ENCODE measurements at regions of chr19 and their contacts with region 1.

Region 1: GRCh38 chr19:55339048-55339888 is at the start of gene KMT5C:
- DNase-seq: peak; percentile 100
- H3K4me3 Mint-ChIP-seq: peak within 1 kb of the TSS; percentile 87
- H3K27ac Mint-ChIP-seq: peak within 1 kb of the TSS; percentile 95
- H3K4me1 Mint-ChIP-seq: peaks cover 13% of the 10 kb centered on the region
- H3K27me3 Mint-ChIP-seq: peaks cover 6% of the 10 kb centered on the region
- total RNA-seq, gene KMT5C: 34.2 to 35.2 TPM

Region 2: GRCh38 chr19:54463531-54464043 is 875.7 kb before region 1 on chr19 and contains the start of gene LENG9:
- CTCF ChIA-PET with region 1: no interaction called
- POLR2A ChIA-PET with region 1: no interaction called
- intact Hi-C with region 1: loop called (anchors 1 kb)
- DNase-seq: peak; percentile 99
- H3K4me3 Mint-ChIP-seq: peak within 1 kb of the TSS; percentile 78
- H3K27ac Mint-ChIP-seq: peak within 1 kb of the TSS; percentile 92
- H3K4me1 Mint-ChIP-seq: peaks cover 29% of the 10 kb centered on the region
- H3K27me3 Mint-ChIP-seq: no peaks in the 10 kb centered on the region
- total RNA-seq, gene LENG9: 5.3 to 5.6 TPM

Region 3: GRCh38 chr19:55279770-55280643 is 59.3 kb before region 1 on chr19 and contains the start of gene HSPBP1:
- CTCF ChIA-PET with region 1: no interaction called
- POLR2A ChIA-PET with region 1: interaction called, 6 read pairs
- intact Hi-C with region 1: loop called (anchors 1 kb)
- DNase-seq: peak; percentile 98
- H3K4me3 Mint-ChIP-seq: peak within 1 kb of the TSS; percentile 93
- H3K27ac Mint-ChIP-seq: peak within 1 kb of the TSS; percentile 84
- H3K4me1 Mint-ChIP-seq: peaks cover 42% of the 10 kb centered on the region
- H3K27me3 Mint-ChIP-seq: no peaks in the 10 kb centered on the region
- total RNA-seq, gene HSPBP1: 45.0 to 45.4 TPM

Region 4: GRCh38 chr19:55301459-55302317 is 37.6 kb before region 1 on chr19:
- CTCF ChIA-PET with region 1: interaction called, 30 read pairs
- POLR2A ChIA-PET with region 1: interaction called, 3 read pairs
- intact Hi-C with region 1: loop called (anchors 2 kb)
- DNase-seq: peak; percentile 95
- H3K4me3 Mint-ChIP-seq: peak overlapping the region; percentile 72
- H3K27ac Mint-ChIP-seq: peak overlapping the region; percentile 56
- H3K4me1 Mint-ChIP-seq: no peaks in the 10 kb centered on the region
- H3K27me3 Mint-ChIP-seq: no peaks in the 10 kb centered on the region

Region 5: DNA sequence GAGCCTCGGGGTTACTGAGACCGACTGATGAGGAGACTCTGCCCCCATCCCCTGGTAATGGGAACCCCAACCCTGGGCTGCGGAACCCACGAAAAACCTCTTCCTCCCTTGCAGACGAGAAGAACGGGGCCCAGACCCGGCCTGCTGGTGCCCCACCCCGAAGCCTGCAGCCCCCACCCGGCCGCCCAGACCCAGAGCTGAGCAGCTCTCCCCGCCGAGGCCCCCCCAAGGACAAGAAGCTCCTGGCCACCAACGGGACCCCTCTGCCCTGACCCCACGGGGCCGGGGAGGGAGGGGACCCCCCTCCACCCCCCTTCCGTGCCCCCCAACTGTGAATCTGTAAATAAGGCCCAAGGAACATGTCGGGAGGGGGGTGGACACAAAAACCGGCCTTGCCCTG is 27.5 kb before region 1 on chr19:
- CTCF ChIA-PET with region 1: no interaction called
- POLR2A ChIA-PET with region 1: no interaction called
- intact Hi-C with region 1: no loop called
- DNase-seq: no peak
- H3K4me3 Mint-ChIP-seq: no peak overlapping the region
- H3K27ac Mint-ChIP-seq: no peak overlapping the region
- H3K4me1 Mint-ChIP-seq: no peaks in the 10 kb centered on the region
- H3K27me3 Mint-ChIP-seq: no peaks in the 10 kb centered on the region

Region 6: DNA sequence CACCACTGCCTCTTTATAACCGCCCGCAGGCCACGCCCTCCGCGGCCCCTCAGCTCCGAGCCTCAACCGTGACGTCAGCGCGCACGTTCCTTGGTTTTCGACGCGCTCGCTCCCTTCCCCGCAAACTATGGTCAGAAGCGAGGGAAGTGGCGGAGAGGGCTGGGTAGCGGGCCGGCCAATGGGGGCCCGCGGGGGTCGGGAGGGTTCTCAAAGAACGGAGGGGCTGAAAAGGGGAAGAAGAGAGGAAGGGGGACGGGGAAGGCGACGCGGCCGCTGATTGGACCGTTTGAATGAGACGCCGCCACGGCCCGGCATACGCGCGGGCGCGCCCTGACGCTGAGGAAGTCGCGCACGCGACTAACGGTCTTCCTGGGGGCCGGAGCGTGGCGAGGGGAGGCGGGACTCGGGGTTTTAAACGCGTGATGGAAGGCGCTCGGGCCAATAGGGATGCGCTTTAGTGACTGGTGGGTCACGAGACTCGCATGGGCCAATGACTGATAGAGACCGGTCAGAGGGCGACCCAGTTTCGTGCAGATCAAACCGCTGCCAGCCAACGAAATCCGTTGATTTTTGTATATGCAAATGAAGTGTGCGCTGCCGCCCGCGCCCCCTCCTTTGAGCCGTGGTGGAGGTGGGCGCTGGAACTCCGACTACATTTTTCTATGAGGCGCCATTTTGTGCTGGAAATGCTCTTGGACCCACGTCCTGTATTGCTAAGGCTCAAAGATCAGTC is 68.7 kb after region 1 on chr19:
- CTCF ChIA-PET with region 1: interaction called, 4 read pairs
- POLR2A ChIA-PET with region 1: interaction called, 14 read pairs
- intact Hi-C with region 1: loop called (anchors 2 kb)
- DNase-seq: peak; percentile 98
- H3K4me3 Mint-ChIP-seq: peak overlapping the region; percentile 90
- H3K27ac Mint-ChIP-seq: peak overlapping the region; percentile 97
- H3K4me1 Mint-ChIP-seq: peaks cover 26% of the 10 kb centered on the region
- H3K27me3 Mint-ChIP-seq: no peaks in the 10 kb centered on the region

Region 7: GRCh38 chr19:55599468-55600279 is 260.4 kb after region 1 on chr19 and contains the start of gene FIZ1:
- CTCF ChIA-PET with region 1: no interaction called
- POLR2A ChIA-PET with region 1: interaction called, 3 read pairs
- intact Hi-C with region 1: loop called (anchors 1 kb)
- DNase-seq: peak; percentile 98
- H3K4me3 Mint-ChIP-seq: peak within 1 kb of the TSS; percentile 91
- H3K27ac Mint-ChIP-seq: peak within 1 kb of the TSS; percentile 95
- H3K4me1 Mint-ChIP-seq: peaks cover 25% of the 10 kb centered on the region
- H3K27me3 Mint-ChIP-seq: no peaks in the 10 kb centered on the region
- total RNA-seq, gene FIZ1: 13.8 to 13.9 TPM

Region 8: DNA sequence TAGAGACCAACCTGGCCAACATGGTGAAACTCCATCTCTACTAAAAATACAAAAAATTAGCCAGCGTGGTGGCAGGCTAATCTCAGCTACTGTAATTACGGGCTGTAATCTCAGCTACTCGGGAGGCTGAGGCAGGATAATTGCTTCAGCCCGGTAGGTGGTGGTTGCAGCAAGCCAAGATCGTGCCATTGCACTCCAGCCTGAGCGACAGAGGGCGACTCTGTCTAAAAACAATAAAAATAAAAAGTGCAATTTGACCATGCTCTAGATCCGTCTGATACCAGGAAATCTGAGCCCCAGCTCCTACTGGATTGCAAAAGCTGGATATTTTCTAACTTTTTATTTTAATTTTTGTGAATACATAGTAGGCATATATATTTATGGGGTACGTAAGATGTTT is 627.3 kb after region 1 on chr19:
- CTCF ChIA-PET with region 1: no interaction called
- POLR2A ChIA-PET with region 1: no interaction called
- intact Hi-C with region 1: no loop called
- DNase-seq: no peak
- H3K4me3 Mint-ChIP-seq: no peak overlapping the region
- H3K27ac Mint-ChIP-seq: no peak overlapping the region
- H3K4me1 Mint-ChIP-seq: no peaks in the 10 kb centered on the region
- H3K27me3 Mint-ChIP-seq: no peaks in the 10 kb centered on the region

Measured in activated CD4-positive, alpha-beta memory T cell treated with anti-CD3 and anti-CD28 coated beads for 36 hours (primary cell).